ENCODE measurements at regions of chr15 and their contacts with region 1.

Region 1: GRCh38 chr15:99213187-99213811 is 36.1 kb downstream of the TTC23 start:
- DNase-seq: peak; percentile 67
- ATAC-seq: peak; percentile 79
- H3K4me3 ChIP-seq: no peak overlapping the region
- H3K27ac ChIP-seq: no peak overlapping the region
- H3K4me1 ChIP-seq: no peaks in the 10 kb centered on the region
- H3K27me3 ChIP-seq: no peaks in the 10 kb centered on the region
- CTCF ChIP-seq: peak; percentile 96
- POLR2A ChIP-seq: no peak; the same call in 1 of the 2 replicates
- RAD21 ChIP-seq: peak; percentile 97

Region 2: DNA sequence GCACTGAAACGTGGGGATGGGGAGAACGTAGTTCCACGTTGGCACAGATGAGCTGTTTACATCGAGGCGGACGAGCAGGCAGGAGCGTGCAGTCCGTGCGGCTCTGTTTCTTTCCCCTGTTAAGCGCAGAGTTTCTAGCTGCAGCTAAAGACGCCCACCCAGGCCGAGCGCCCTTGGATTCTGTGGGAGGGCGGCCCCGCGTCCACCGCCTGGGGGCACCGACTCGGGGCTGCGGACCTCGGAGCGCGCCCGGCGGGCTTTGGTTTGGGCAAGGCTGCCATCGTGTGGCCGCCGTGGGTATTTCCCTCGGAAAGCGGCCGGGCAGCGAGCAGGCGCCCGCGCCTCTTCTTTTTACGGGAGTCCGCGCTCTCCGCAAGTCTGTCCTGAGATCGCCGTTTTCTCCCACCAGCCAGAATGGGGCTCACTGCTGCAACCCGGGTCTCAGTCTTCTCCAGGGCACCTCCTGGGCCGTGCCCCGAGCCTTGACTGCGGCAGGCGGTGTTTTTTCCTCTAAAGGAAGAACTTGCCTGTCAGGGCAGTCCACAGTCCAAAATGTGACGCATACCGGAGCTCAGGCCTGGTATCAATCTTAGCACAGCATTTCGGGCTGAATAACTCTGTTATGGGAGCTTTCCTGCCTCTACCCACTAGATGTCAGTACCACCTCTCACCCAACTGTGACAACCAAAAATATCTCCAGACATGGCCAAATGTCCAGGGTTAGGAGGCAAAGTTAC is 784.9 kb before region 1 on chr15:
- CTCF ChIA-PET with region 1: no interaction called
- POLR2A ChIA-PET with region 1: no interaction called
- dilution Hi-C with region 1: no loop called
- in situ Hi-C with region 1: loop called (anchors 25 kb)
- intact Hi-C with region 1: no loop called
- DNase-seq: peak; percentile 50
- ATAC-seq: peak; percentile 99
- H3K4me3 ChIP-seq: peak overlapping the region; percentile 50
- H3K27ac ChIP-seq: no peak overlapping the region
- H3K4me1 ChIP-seq: no peaks in the 10 kb centered on the region
- H3K27me3 ChIP-seq: peaks cover 18% of the 10 kb centered on the region
- CTCF ChIP-seq: peak; percentile 78
- POLR2A ChIP-seq: no peak
- RAD21 ChIP-seq: peak; percentile 52

Region 3: GRCh38 chr15:98713585-98714001 is 499.7 kb before region 1 on chr15:
- CTCF ChIA-PET with region 1: no interaction called
- POLR2A ChIA-PET with region 1: no interaction called
- dilution Hi-C with region 1: no loop called
- in situ Hi-C with region 1: no loop called
- intact Hi-C with region 1: no loop called
- DNase-seq: no peak
- ATAC-seq: no peak
- H3K4me3 ChIP-seq: no peak overlapping the region
- H3K27ac ChIP-seq: no peak overlapping the region
- H3K4me1 ChIP-seq: peaks cover 18% of the 10 kb centered on the region
- H3K27me3 ChIP-seq: no peaks in the 10 kb centered on the region
- CTCF ChIP-seq: no peak
- POLR2A ChIP-seq: no peak
- RAD21 ChIP-seq: no peak

Region 4: DNA sequence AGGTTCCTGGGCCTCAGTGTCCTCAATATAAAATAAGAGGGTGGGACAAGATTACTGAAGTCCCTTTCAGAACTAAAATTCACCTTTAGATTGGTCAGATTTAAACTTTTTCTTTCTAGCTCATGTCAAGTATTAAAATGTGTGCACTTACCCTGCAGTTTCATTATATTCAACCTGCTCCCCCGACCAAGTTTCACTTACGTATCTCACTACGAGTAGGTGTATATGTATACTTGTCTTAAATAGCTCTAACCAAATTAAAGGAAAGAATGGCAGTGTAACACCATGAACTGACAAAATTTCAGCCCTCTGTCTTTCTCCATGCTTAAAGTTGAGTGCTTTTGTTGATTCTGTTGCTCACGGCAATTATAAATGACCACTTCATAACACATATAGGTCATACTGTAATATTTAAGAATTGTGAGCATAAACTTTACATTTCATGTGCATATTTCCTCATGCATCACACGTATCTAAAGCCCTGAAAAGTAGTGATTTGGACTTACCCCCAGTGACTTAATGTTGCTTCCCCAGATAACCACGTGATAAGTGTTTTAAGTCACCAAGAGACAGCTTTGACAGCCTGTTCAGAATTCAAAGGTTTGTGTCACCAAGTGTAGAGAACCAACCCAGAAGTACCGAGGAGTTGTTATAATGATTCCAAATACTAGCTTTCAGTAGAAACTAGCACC is 275.7 kb before region 1 on chr15:
- CTCF ChIA-PET with region 1: no interaction called
- POLR2A ChIA-PET with region 1: no interaction called
- dilution Hi-C with region 1: no loop called
- in situ Hi-C with region 1: no loop called
- intact Hi-C with region 1: loop called (anchors 10 kb)
- DNase-seq: no peak
- ATAC-seq: no peak
- H3K4me3 ChIP-seq: no peak overlapping the region
- H3K27ac ChIP-seq: no peak overlapping the region
- H3K4me1 ChIP-seq: peaks cover 4% of the 10 kb centered on the region
- H3K27me3 ChIP-seq: no peaks in the 10 kb centered on the region
- CTCF ChIP-seq: no peak
- POLR2A ChIP-seq: no peak
- RAD21 ChIP-seq: no peak

Region 5: GRCh38 chr15:99096894-99097426 is 116.3 kb before region 1 on chr15:
- CTCF ChIA-PET with region 1: interaction called, 21 read pairs
- POLR2A ChIA-PET with region 1: no interaction called
- dilution Hi-C with region 1: loop called (anchors 25 kb)
- in situ Hi-C with region 1: loop called (anchors 5 kb)
- intact Hi-C with region 1: loop called (anchors 1 kb)
- DNase-seq: no peak
- ATAC-seq: no peak
- H3K4me3 ChIP-seq: no peak overlapping the region
- H3K27ac ChIP-seq: no peak overlapping the region
- H3K4me1 ChIP-seq: peaks cover 1% of the 10 kb centered on the region; the same call in 1 of the 2 replicates
- H3K27me3 ChIP-seq: peaks cover 12% of the 10 kb centered on the region
- CTCF ChIP-seq: no peak
- POLR2A ChIP-seq: no peak
- RAD21 ChIP-seq: no peak

Region 6: DNA sequence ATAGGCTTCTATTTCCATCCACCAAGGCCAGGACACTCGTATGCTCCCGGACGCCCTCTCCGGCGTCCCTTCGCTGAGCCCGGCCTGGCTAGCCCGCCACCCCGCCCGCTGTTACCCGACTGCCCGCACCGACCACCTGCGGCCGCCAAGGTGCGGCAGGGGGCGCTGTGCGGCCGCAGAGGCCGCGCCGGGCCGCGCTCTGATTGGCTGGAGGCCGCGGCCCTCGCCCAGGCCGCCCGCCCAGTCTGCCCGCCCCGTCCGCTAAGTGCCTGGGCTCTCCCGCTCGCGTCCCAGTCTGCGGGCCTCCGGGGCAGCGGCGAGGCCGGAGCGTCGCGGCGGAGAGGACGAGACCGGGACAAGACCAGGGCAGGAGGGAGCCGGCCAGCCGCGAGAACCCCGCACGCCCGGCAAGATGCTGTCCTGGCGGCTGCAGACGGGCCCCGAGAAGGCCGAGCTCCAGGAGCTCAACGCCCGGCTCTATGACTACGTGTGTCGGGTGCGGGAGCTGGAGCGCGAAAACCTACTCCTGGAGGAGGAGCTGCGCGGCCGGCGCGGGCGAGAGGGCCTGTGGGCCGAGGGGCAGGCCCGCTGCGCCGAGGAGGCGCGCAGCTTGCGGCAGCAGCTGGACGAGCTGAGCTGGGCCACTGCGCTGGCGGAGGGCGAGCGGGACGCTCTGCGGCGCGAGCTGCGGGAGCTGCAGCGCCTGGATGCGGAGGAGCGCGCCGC is 108.3 kb before region 1 on chr15 and contains the start of gene SYNM:
- CTCF ChIA-PET with region 1: interaction called, 21 read pairs
- POLR2A ChIA-PET with region 1: no interaction called
- dilution Hi-C with region 1: loop called (anchors 25 kb)
- in situ Hi-C with region 1: no loop called
- intact Hi-C with region 1: loop called (anchors 1 kb)
- DNase-seq: peak; percentile 72
- ATAC-seq: peak; percentile 76
- H3K4me3 ChIP-seq: peak within 1 kb of the TSS; percentile 60
- H3K27ac ChIP-seq: no peak within 1 kb of the TSS
- H3K4me1 ChIP-seq: peaks cover 1% of the 10 kb centered on the region; the same call in 1 of the 2 replicates
- H3K27me3 ChIP-seq: peaks cover 6% of the 10 kb centered on the region
- CTCF ChIP-seq: peak; percentile 89
- POLR2A ChIP-seq: peak; percentile 83
- RAD21 ChIP-seq: peak; percentile 70
- total RNA-seq, gene SYNM: 3.4 and 5.0 TPM in 2 replicates

Region 7: GRCh38 chr15:99123706-99124451 is 89.4 kb before region 1 on chr15:
- CTCF ChIA-PET with region 1: no interaction called
- POLR2A ChIA-PET with region 1: no interaction called
- dilution Hi-C with region 1: loop called (anchors 25 kb)
- in situ Hi-C with region 1: no loop called
- intact Hi-C with region 1: loop called (anchors 5 kb)
- DNase-seq: peak; percentile 96
- ATAC-seq: peak; percentile 93
- H3K4me3 ChIP-seq: no peak overlapping the region
- H3K27ac ChIP-seq: peak overlapping the region; percentile 91
- H3K4me1 ChIP-seq: peaks cover 14% of the 10 kb centered on the region
- H3K27me3 ChIP-seq: no peaks in the 10 kb centered on the region
- CTCF ChIP-seq: no peak
- POLR2A ChIP-seq: no peak
- RAD21 ChIP-seq: no peak

Region 8: GRCh38 chr15:99305761-99306505 is 92.6 kb after region 1 on chr15:
- CTCF ChIA-PET with region 1: no interaction called
- POLR2A ChIA-PET with region 1: no interaction called
- dilution Hi-C with region 1: no loop called
- in situ Hi-C with region 1: no loop called
- intact Hi-C with region 1: no loop called
- DNase-seq: peak; percentile 87
- ATAC-seq: peak; percentile 71
- H3K4me3 ChIP-seq: no peak overlapping the region
- H3K27ac ChIP-seq: no peak overlapping the region
- H3K4me1 ChIP-seq: peaks cover 5% of the 10 kb centered on the region
- H3K27me3 ChIP-seq: no peaks in the 10 kb centered on the region
- CTCF ChIP-seq: no peak
- POLR2A ChIP-seq: no peak
- RAD21 ChIP-seq: no peak

Region 9: DNA sequence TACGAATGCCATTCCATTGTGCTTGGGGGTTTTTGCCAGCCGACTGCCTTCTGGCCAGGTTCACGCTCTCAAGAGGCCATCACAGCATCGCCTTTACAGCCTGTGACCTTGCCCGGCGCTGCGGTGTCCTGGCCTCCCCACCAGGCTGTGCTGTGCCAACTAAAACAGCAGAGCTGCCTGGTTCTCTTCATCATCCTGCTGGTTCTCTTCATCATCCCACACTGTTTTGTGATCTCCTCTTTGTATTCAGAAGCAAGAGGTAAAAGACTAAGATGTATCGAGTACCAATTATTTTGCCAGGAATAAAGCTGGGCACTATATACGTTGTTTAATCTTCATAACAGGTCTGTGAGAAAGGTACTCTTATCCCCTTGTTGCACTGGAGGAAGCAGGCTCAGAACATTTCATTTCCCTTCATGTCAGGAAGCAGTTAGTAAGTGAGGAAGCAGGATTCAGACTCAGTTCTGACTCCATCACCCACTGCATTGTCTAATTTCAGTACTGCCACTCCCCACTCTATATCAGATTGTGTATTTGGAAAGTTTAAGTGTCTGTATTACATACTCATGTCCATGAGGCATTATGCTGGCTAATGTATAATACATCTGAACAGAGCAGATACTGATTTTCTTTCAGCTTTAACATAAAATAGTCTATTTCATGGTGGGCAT is 130.7 kb after region 1 on chr15:
- CTCF ChIA-PET with region 1: no interaction called
- POLR2A ChIA-PET with region 1: no interaction called
- dilution Hi-C with region 1: no loop called
- in situ Hi-C with region 1: no loop called
- intact Hi-C with region 1: no loop called
- DNase-seq: no peak
- ATAC-seq: no peak
- H3K4me3 ChIP-seq: no peak overlapping the region
- H3K27ac ChIP-seq: no peak overlapping the region
- H3K4me1 ChIP-seq: peaks cover 14% of the 10 kb centered on the region
- H3K27me3 ChIP-seq: no peaks in the 10 kb centered on the region
- CTCF ChIP-seq: no peak
- POLR2A ChIP-seq: no peak
- RAD21 ChIP-seq: no peak